Activated CD4-positive, alpha-beta T cell treated with anti-CD3 and anti-CD28 coated beads for 36 hours (primary cell): ENCODE measurements at regions of chr10 and their contacts with region 1.

Region 1: DNA sequence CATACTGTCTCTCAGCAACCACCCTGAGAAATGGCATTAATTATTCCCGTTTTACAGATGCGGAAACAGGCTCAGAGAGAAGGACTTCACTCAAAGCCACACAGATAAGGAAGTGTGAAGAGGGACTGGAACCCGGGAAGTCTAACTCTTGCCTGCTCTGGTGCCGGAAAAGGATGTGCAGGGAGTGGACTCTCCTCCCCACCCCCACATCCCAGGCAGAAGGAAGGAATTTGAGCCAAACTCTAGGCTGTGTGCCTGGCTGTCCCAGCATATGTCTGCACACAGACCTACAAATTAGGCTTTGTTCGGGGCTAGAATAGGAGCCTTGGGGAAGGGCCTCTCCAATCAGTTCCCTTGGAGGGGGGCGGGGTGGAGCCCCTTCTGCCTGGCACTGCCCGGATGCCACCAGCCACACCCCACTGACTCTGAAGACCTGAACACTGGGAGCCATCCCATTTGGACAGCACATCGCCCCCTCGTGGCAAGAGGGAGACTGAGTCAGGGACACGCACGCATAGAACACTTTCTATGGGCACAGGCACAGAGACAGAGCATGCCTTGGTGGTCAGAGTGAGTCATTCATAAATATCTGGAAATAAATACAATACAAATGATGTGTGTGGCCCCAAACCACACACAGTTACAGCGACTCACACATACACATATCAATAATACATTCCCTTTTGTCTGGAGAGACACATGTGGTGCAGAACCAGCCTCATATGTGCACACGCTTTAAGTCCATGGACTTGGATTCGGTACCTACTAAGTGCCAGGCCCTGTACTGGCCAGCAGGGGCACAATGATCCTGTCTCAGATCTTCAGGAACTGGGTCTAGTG is 13.1 kb downstream of the LZTS2 start:
- DNase-seq: peak; percentile 90
- ATAC-seq: peak; percentile 85
- H3K4me3 Mint-ChIP-seq: no peak overlapping the region
- H3K27ac Mint-ChIP-seq: no peak overlapping the region
- H3K4me1 Mint-ChIP-seq: peaks cover 22% of the 10 kb centered on the region
- H3K27me3 Mint-ChIP-seq: peaks cover 25% of the 10 kb centered on the region

Region 2: GRCh38 chr10:100327007-100327717 is 685.6 kb before region 1 on chr10:
- CTCF ChIA-PET with region 1: no interaction called
- POLR2A ChIA-PET with region 1: no interaction called
- intact Hi-C with region 1: no loop called
- DNase-seq: peak; percentile 65
- ATAC-seq: peak; percentile 98
- H3K4me3 Mint-ChIP-seq: no peak overlapping the region
- H3K27ac Mint-ChIP-seq: peak overlapping the region; percentile 43
- H3K4me1 Mint-ChIP-seq: peaks cover 13% of the 10 kb centered on the region
- H3K27me3 Mint-ChIP-seq: peaks cover 4% of the 10 kb centered on the region

Region 3: GRCh38 chr10:100562008-100562711 is 450.6 kb before region 1 on chr10:
- CTCF ChIA-PET with region 1: interaction called, 6 read pairs
- POLR2A ChIA-PET with region 1: no interaction called
- intact Hi-C with region 1: loop called (anchors 1 to 5 kb)
- DNase-seq: peak; percentile 90
- ATAC-seq: peak; percentile 95
- H3K4me3 Mint-ChIP-seq: no peak overlapping the region
- H3K27ac Mint-ChIP-seq: no peak overlapping the region
- H3K4me1 Mint-ChIP-seq: peaks cover 11% of the 10 kb centered on the region
- H3K27me3 Mint-ChIP-seq: peaks cover 24% of the 10 kb centered on the region

Region 4: DNA sequence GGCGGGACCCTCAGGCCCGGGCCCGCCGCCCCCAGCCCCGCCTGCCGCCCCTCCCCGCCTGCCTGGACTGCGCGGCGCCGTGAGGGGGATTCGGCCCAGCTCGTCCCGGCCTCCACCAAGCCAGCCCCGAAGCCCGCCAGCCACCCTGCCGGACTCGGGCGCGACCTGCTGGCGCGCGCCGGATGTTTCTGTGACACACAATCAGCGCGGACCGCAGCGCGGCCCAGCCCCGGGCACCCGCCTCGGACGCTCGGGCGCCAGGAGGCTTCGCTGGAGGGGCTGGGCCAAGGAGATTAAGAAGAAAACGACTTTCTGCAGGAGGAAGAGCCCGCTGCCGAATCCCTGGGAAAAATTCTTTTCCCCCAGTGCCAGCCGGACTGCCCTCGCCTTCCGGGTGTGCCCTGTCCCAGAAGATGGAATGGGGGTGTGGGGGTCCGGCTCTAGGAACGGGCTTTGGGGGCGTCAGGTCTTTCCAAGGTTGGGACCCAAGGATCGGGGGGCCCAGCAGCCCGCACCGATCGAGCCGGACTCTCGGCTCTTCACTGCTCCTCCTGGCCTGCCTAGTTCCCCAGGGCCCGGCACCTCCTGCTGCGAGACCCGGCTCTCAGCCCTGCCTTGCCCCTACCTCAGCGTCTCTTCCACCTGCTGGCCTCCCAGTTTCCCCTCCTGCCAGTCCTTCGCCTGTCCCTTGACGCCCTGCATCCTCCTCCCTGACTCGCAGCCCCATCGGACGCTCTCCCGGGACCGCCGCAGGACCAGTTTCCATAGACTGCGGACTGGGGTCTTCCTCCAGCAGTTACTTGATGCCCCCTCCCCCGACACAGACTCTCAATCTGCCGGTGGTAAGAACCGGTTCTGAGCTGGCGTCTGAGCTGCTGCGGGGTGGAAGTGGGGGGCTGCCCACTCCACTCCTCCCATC is 184.7 kb before region 1 on chr10:
- CTCF ChIA-PET with region 1: no interaction called
- POLR2A ChIA-PET with region 1: no interaction called
- intact Hi-C with region 1: no loop called
- DNase-seq: peak; percentile 62
- ATAC-seq: peak; percentile 48
- H3K4me3 Mint-ChIP-seq: peak overlapping the region; percentile 70
- H3K27ac Mint-ChIP-seq: no peak overlapping the region
- H3K4me1 Mint-ChIP-seq: peaks cover 24% of the 10 kb centered on the region
- H3K27me3 Mint-ChIP-seq: peaks cover 66% of the 10 kb centered on the region

Region 5: GRCh38 chr10:100969187-100970075 is 43.3 kb before region 1 on chr10 and contains the start of gene SEMA4G:
- CTCF ChIA-PET with region 1: interaction called, 6 read pairs
- POLR2A ChIA-PET with region 1: no interaction called
- intact Hi-C with region 1: loop called in 1 of 2 experiments (anchors 1 kb)
- DNase-seq: peak; percentile 62
- ATAC-seq: peak; percentile 81
- H3K4me3 Mint-ChIP-seq: peak within 1 kb of the TSS; percentile 41
- H3K27ac Mint-ChIP-seq: no peak within 1 kb of the TSS
- H3K4me1 Mint-ChIP-seq: peaks cover 13% of the 10 kb centered on the region
- H3K27me3 Mint-ChIP-seq: no peaks in the 10 kb centered on the region
- total RNA-seq, gene SEMA4G: 0.62 to 0.84 TPM

Region 6: GRCh38 chr10:101031128-101031795 is 18.5 kb after region 1 on chr10 and contains the starts of genes PDZD7 and SFXN3:
- CTCF ChIA-PET with region 1: interaction called, 29 read pairs
- POLR2A ChIA-PET with region 1: no interaction called
- intact Hi-C with region 1: loop called (anchors 1 to 2 kb)
- DNase-seq: peak; percentile 98
- ATAC-seq: peak; percentile 85
- H3K4me3 Mint-ChIP-seq: peak within 1 kb of the TSS; percentile 80
- H3K27ac Mint-ChIP-seq: peak within 1 kb of the TSS; percentile 82
- H3K4me1 Mint-ChIP-seq: peaks cover 22% of the 10 kb centered on the region
- H3K27me3 Mint-ChIP-seq: no peaks in the 10 kb centered on the region
- total RNA-seq, gene PDZD7: 0.28 to 0.32 TPM
- total RNA-seq, gene SFXN3: 30.0 to 37.7 TPM

Region 7: GRCh38 chr10:101050208-101051069 is 37.7 kb after region 1 on chr10:
- CTCF ChIA-PET with region 1: interaction called, 12 read pairs
- POLR2A ChIA-PET with region 1: no interaction called
- intact Hi-C with region 1: no loop called
- DNase-seq: peak; percentile 88
- ATAC-seq: peak; percentile 92
- H3K4me3 Mint-ChIP-seq: no peak overlapping the region
- H3K27ac Mint-ChIP-seq: no peak overlapping the region
- H3K4me1 Mint-ChIP-seq: peaks cover 10% of the 10 kb centered on the region
- H3K27me3 Mint-ChIP-seq: peaks cover 43% of the 10 kb centered on the region

Region 8: GRCh38 chr10:101060036-101060950 is 47.5 kb after region 1 on chr10:
- CTCF ChIA-PET with region 1: interaction called, 17 read pairs
- POLR2A ChIA-PET with region 1: no interaction called
- intact Hi-C with region 1: loop called in 1 of 2 experiments (anchors 10 kb)
- DNase-seq: peak; percentile 95
- ATAC-seq: peak; percentile 75
- H3K4me3 Mint-ChIP-seq: peak overlapping the region; percentile 82
- H3K27ac Mint-ChIP-seq: peak overlapping the region; percentile 96
- H3K4me1 Mint-ChIP-seq: peaks cover 22% of the 10 kb centered on the region
- H3K27me3 Mint-ChIP-seq: peaks cover 22% of the 10 kb centered on the region

Region 9: GRCh38 chr10:101067356-101068083 is 54.8 kb after region 1 on chr10:
- CTCF ChIA-PET with region 1: interaction called, 13 read pairs
- POLR2A ChIA-PET with region 1: no interaction called
- intact Hi-C with region 1: loop called in 1 of 2 experiments (anchors 10 kb)
- DNase-seq: peak; percentile 87
- ATAC-seq: peak; percentile 74
- H3K4me3 Mint-ChIP-seq: peak overlapping the region; percentile 72
- H3K27ac Mint-ChIP-seq: peak overlapping the region; percentile 25
- H3K4me1 Mint-ChIP-seq: peaks cover 28% of the 10 kb centered on the region
- H3K27me3 Mint-ChIP-seq: peaks cover 30% of the 10 kb centered on the region